ENCODE measurements at regions of chr19 and their contacts with region 1.

Region 1: GRCh38 chr19:17282488-17283255 is 971 bp downstream of the ANKLE1 start:
- DNase-seq: peak; percentile 91
- H3K4me3 ChIP-seq: peak overlapping the region in 3 of 4 donors; percentile 0 to 43 (median 27)
- H3K27ac ChIP-seq: no peak overlapping the region
- H3K4me1 ChIP-seq: peaks cover 12 to 18% (median 16%) of the 10 kb centered on the region in 4 donors
- H3K27me3 ChIP-seq: peaks cover 14% of the 10 kb centered on the region
- CTCF ChIP-seq: peak; percentile 87 to 97 (median 95)
- EP300 ChIP-seq: no peak
- POLR2A ChIP-seq: no peak

Region 2: DNA sequence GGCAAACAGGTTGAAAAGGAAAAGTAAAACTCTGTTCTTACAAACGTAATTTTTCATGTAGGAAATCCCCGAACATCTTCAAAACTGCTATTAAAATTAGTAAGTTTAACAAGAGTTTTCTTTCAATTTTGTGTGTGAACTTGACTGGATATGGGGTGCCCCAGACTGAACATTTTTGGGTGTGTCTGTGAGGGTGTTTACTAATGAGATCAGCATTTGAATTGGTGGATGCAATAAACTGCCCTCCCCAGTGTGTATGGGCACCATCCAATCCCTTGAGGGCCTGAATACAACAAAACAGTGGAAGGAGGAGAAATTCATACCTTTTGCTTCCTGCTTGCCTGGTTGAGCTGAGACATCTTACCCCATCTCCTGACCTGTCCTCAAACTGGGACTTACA is 219.2 kb before region 1 on chr19:
- in situ Hi-C with region 1: loop called (anchors 10 to 25 kb)
- intact Hi-C with region 1: loop called (anchors 1 kb)
- DNase-seq: no peak
- H3K4me3 ChIP-seq: no peak overlapping the region
- H3K27ac ChIP-seq: peak overlapping the region; percentile 7 to 86 (median 64)
- H3K4me1 ChIP-seq: peaks cover 0 to 39% (median 22%) of the 10 kb centered on the region in 4 donors
- H3K27me3 ChIP-seq: no peaks in the 10 kb centered on the region
- CTCF ChIP-seq: no peak
- EP300 ChIP-seq: no peak
- POLR2A ChIP-seq: no peak

Region 3: GRCh38 chr19:17069218-17069617 is 213.5 kb before region 1 on chr19:
- in situ Hi-C with region 1: loop called (anchors 10 to 25 kb)
- intact Hi-C with region 1: no loop called
- DNase-seq: no peak
- H3K4me3 ChIP-seq: no peak overlapping the region
- H3K27ac ChIP-seq: no peak overlapping the region
- H3K4me1 ChIP-seq: peaks cover 4 to 19% (median 7%) of the 10 kb centered on the region in 4 donors
- H3K27me3 ChIP-seq: no peaks in the 10 kb centered on the region
- CTCF ChIP-seq: no peak
- EP300 ChIP-seq: no peak
- POLR2A ChIP-seq: no peak

Region 4: GRCh38 chr19:17205237-17206140 is 77.2 kb before region 1 on chr19:
- in situ Hi-C with region 1: loop called in 2 of 4 experiments (anchors 10 kb)
- intact Hi-C with region 1: loop called (anchors 2 kb)
- DNase-seq: peak; percentile 82
- H3K4me3 ChIP-seq: no peak overlapping the region
- H3K27ac ChIP-seq: no peak overlapping the region
- H3K4me1 ChIP-seq: no peaks in the 10 kb centered on the region
- H3K27me3 ChIP-seq: no peaks in the 10 kb centered on the region
- CTCF ChIP-seq: peak; percentile 63 to 82 (median 66)
- EP300 ChIP-seq: no peak
- POLR2A ChIP-seq: no peak

Region 5: GRCh38 chr19:17215125-17215971 is 67.3 kb before region 1 on chr19 and contains the start of gene USE1:
- in situ Hi-C with region 1: loop called in 1 of 4 experiments (anchors 10 kb)
- intact Hi-C with region 1: no loop called
- DNase-seq: peak; percentile 93
- H3K4me3 ChIP-seq: peak within 1 kb of the TSS; percentile 44 to 80 (median 68)
- H3K27ac ChIP-seq: peak within 1 kb of the TSS; percentile 85 to 94 (median 91)
- H3K4me1 ChIP-seq: peaks cover 4 to 21% (median 20%) of the 10 kb centered on the region in 4 donors
- H3K27me3 ChIP-seq: no peaks in the 10 kb centered on the region
- CTCF ChIP-seq: no peak
- EP300 ChIP-seq: no peak
- POLR2A ChIP-seq: peak; percentile 80
- total RNA-seq, gene USE1: 18.3 to 30.7 (median 24.5) TPM

Measured in transverse colon (tissue), 4 donors.